ENCODE measurements at regions of chr5 and their contacts with region 1.

Region 1: GRCh38 chr5:39399135-39400036 is 25.4 kb downstream of the DAB2 start:
- DNase-seq: peak; percentile 64 to 70
- H3K4me3 ChIP-seq: no peak overlapping the region
- H3K4me3 Mint-ChIP-seq: peak overlapping the region; percentile 23
- H3K27ac Mint-ChIP-seq: peak overlapping the region; percentile 92
- H3K4me1 ChIP-seq: peaks cover 50% of the 10 kb centered on the region
- H3K4me1 Mint-ChIP-seq: peaks cover 40% of the 10 kb centered on the region
- H3K27me3 ChIP-seq: no peaks in the 10 kb centered on the region
- H3K27me3 Mint-ChIP-seq: no peaks in the 10 kb centered on the region
- CTCF ChIP-seq: no peak

Region 2: DNA sequence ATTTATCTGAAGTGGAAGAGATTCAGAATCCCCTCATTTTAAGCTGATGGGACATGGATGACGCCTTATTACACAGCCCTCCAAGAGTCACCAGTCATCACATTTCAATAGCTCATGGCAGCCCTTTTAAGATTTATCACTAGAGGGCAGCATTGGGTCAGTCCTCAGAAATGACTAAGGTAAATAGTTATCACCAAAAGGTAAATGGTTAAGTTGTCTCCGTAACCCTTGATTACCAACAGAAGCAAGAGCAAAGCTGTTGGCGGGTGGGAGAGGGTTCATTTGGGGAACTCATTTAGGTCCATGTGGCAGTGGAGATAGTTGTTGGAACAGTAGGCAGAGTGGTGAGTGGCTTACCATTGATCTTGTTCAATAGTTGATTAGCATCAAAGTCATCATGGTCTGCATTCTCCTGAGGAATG is 23.1 kb before region 1 on chr5:
- CTCF ChIA-PET with region 1: interaction called, 21 read pairs
- POLR2A ChIA-PET with region 1: no interaction called
- intact Hi-C with region 1: loop called (anchors 2 kb)
- DNase-seq: peak; percentile 51 to 76
- H3K4me3 ChIP-seq: no peak overlapping the region
- H3K4me3 Mint-ChIP-seq: no peak overlapping the region
- H3K27ac Mint-ChIP-seq: no peak overlapping the region
- H3K4me1 ChIP-seq: peaks cover 18% of the 10 kb centered on the region
- H3K4me1 Mint-ChIP-seq: peaks cover 13% of the 10 kb centered on the region
- H3K27me3 ChIP-seq: no peaks in the 10 kb centered on the region
- H3K27me3 Mint-ChIP-seq: no peaks in the 10 kb centered on the region
- CTCF ChIP-seq: peak; percentile 70 to 79

Region 3: GRCh38 chr5:39447968-39448367 is 48.6 kb after region 1 on chr5:
- CTCF ChIA-PET with region 1: no interaction called
- POLR2A ChIA-PET with region 1: no interaction called
- intact Hi-C with region 1: loop called (anchors 2 kb)
- DNase-seq: peak; percentile 54 to 77
- H3K4me3 ChIP-seq: no peak overlapping the region
- H3K4me3 Mint-ChIP-seq: peak overlapping the region; percentile 31
- H3K27ac Mint-ChIP-seq: peak overlapping the region; percentile 48
- H3K4me1 ChIP-seq: peaks cover 54% of the 10 kb centered on the region
- H3K4me1 Mint-ChIP-seq: peaks cover 13% of the 10 kb centered on the region
- H3K27me3 ChIP-seq: no peaks in the 10 kb centered on the region
- H3K27me3 Mint-ChIP-seq: no peaks in the 10 kb centered on the region
- CTCF ChIP-seq: no peak

Region 4: GRCh38 chr5:39503146-39503545 is 103.8 kb after region 1 on chr5:
- CTCF ChIA-PET with region 1: no interaction called
- POLR2A ChIA-PET with region 1: no interaction called
- intact Hi-C with region 1: no loop called
- DNase-seq: no peak
- H3K4me3 ChIP-seq: no peak overlapping the region
- H3K4me3 Mint-ChIP-seq: no peak overlapping the region
- H3K27ac Mint-ChIP-seq: no peak overlapping the region
- H3K4me1 ChIP-seq: no peaks in the 10 kb centered on the region
- H3K4me1 Mint-ChIP-seq: peaks cover 6% of the 10 kb centered on the region
- H3K27me3 ChIP-seq: no peaks in the 10 kb centered on the region
- H3K27me3 Mint-ChIP-seq: no peaks in the 10 kb centered on the region
- CTCF ChIP-seq: no peak

Region 5: DNA sequence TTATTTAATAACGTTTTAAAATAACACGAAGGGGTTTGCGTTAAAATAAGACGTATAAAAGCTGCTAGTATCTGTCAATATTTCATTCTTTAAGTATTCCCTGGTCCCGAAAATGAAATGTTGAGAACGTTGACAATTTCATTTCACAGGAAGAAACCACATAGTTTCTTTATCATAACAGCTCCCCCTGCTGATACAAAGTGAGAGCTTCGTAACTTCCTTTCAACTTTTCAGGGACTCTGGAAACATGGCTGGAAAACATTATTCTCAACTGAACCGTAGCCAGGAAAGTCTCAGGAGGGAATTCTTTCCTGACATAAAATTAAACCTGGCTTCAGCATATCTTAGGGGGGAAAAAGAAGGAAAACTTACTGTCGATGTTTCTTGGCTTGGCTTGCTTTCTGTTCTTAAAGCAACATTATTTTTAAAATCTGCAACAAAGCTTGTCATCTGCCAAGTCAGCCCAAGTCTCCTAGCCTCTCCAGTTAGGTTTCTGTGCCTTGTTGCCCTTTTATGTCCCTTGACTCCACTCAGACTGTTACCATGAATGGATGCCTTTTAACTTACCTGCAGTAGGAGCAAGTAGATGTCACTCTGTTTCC is 148.3 kb after region 1 on chr5:
- CTCF ChIA-PET with region 1: interaction called, 10 read pairs
- POLR2A ChIA-PET with region 1: no interaction called
- intact Hi-C with region 1: no loop called
- DNase-seq: peak in 1 of 2 experiments; percentile 65
- H3K4me3 ChIP-seq: no peak overlapping the region
- H3K4me3 Mint-ChIP-seq: no peak overlapping the region
- H3K27ac Mint-ChIP-seq: no peak overlapping the region
- H3K4me1 ChIP-seq: peaks cover 12% of the 10 kb centered on the region
- H3K4me1 Mint-ChIP-seq: no peaks in the 10 kb centered on the region
- H3K27me3 ChIP-seq: no peaks in the 10 kb centered on the region
- H3K27me3 Mint-ChIP-seq: no peaks in the 10 kb centered on the region
- CTCF ChIP-seq: peak; percentile 58 to 82

Measured in Caco-2 (cell line).